ENCODE measurements at regions of chr12 and their contacts with region 1.

Region 1: DNA sequence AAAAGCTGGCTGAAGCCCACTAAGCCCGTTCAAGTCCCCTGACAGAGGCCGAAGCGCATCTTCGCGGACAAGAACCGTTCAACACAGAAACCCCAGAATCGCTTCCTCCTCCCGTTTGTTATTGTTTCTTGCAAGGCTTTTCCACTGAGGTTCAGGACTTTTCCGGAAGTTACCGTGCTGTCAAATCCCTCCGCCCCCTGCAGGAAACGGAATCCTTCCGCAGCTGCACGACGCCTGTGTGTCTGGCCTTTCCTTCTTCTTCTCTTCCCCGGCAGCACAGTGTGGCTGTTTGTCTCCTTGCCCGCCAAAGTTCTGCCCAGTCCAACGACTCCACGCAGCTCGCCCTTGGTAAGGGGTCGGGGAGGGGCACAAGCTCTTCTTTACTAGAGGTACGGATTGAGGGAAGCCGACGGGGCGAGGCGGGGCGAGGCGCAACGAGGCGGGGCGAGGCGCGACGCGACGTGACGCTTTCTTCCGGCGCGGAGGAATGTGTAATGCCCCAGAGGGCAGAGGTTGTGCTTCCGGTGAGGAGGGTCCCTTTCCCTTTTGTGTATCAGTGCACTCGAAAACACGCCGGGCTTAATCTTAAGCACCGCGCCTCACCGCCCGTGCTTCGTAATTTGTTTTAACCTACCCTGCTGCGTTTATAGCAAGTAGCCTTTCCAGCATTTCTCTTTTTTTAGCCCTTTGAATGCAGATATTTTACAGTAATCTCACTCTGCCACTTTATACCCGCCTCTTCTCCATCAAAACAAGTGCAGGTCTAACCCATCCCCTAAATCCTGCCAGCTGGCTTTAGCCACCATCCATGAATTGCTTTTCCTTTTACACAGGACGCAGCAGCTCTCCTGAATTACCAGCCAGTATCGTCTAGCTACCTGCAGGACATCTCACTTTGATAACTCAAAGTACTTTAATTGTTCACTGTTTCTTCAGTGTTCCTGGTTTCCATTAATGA is at the start of gene KDM5A:
- DNase-seq: peak; percentile 82 to 97 (median 94)
- ATAC-seq: peak; percentile 97
- H3K4me3 ChIP-seq: peak within 1 kb of the TSS; percentile 96
- H3K4me3 Mint-ChIP-seq: peak within 1 kb of the TSS; percentile 91 to 100 (median 97)
- H3K27ac ChIP-seq: peak within 1 kb of the TSS; percentile 91
- H3K27ac Mint-ChIP-seq: peak within 1 kb of the TSS; percentile 95 to 100 (median 99)
- H3K4me1 ChIP-seq: peaks cover 31% of the 10 kb centered on the region in 2 donors
- H3K4me1 Mint-ChIP-seq: peaks cover 28 to 55% (median 39%) of the 10 kb centered on the region in 7 donors
- H3K27me3 ChIP-seq: no peaks in the 10 kb centered on the region
- H3K27me3 Mint-ChIP-seq: peaks cover 0 to 3% (median 0%) of the 10 kb centered on the region in 5 donors
- total RNA-seq, gene KDM5A: 110 to 138 (median 124) TPM

Region 2: GRCh38 chr12:128079-128478 is 261.3 kb before region 1 on chr12:
- CTCF ChIA-PET with region 1: no interaction called
- POLR2A ChIA-PET with region 1: no interaction called
- intact Hi-C with region 1: no loop called
- DNase-seq: no peak
- ATAC-seq: peak; percentile 16
- H3K4me3 ChIP-seq: no peak overlapping the region
- H3K4me3 Mint-ChIP-seq: no peak overlapping the region
- H3K27ac ChIP-seq: no peak overlapping the region
- H3K27ac Mint-ChIP-seq: no peak overlapping the region
- H3K4me1 ChIP-seq: no peaks in the 10 kb centered on the region
- H3K4me1 Mint-ChIP-seq: peaks cover 0 to 1% (median 0%) of the 10 kb centered on the region in 7 donors
- H3K27me3 ChIP-seq: no peaks in the 10 kb centered on the region
- H3K27me3 Mint-ChIP-seq: peaks cover 0 to 24% (median 13%) of the 10 kb centered on the region in 5 donors

Region 3: DNA sequence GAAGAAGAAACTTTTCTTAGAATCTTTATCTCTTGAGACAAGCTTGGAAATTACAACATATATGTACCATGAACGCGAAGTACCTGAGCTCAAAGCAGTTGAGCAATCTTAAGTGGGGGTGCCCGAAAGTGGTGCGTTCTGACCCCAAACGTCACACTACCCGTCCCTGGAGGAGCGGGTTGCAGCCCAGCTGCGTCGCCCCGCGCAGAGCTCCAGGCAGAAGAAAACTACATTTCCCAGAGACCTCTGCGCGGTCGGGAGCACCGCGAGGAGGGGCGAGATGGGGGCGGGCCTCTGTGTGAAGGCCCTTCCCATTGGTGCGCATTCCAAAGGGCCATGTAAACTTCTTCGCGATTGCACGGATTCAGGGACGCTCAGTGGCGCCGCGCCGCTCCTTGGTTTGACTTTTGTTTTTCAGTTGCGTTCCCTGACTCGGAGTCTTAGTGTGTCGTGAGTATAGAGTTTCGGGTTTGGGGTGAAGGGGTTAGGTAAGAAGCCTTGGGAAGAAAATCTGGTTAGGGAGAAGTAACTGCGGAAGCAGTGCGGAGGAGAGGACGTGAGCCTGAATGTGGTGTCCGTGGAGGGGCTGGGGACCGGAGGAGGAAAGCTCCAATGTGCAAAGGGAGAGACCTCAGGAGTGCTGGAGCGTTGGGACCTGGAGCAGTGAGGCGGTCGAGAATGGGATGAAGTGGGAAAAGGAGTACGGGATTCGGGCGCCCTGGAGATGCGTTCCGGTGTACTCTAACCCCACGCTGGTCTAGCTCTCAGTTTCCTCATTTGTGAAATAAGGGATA is 12.0 kb after region 1 on chr12 and contains the start of gene CCDC77:
- CTCF ChIA-PET with region 1: interaction called, 8 read pairs
- POLR2A ChIA-PET with region 1: interaction called, 89 read pairs
- intact Hi-C with region 1: loop called (anchors 1 kb)
- DNase-seq: peak; percentile 91 to 97 (median 95)
- ATAC-seq: peak; percentile 100
- H3K4me3 ChIP-seq: peak within 1 kb of the TSS; percentile 94
- H3K4me3 Mint-ChIP-seq: no peak within 1 kb of the TSS
- H3K27ac ChIP-seq: peak within 1 kb of the TSS; percentile 71
- H3K27ac Mint-ChIP-seq: peak within 1 kb of the TSS in 1 of 9 donors; percentile 62
- H3K4me1 ChIP-seq: peaks cover 4 to 13% of the 10 kb centered on the region in 2 donors
- H3K4me1 Mint-ChIP-seq: peaks cover 0 to 9% (median 5%) of the 10 kb centered on the region in 7 donors
- H3K27me3 ChIP-seq: no peaks in the 10 kb centered on the region
- H3K27me3 Mint-ChIP-seq: no peaks in the 10 kb centered on the region
- total RNA-seq, gene CCDC77: 9.7 to 15.6 (median 12.7) TPM

Region 4: DNA sequence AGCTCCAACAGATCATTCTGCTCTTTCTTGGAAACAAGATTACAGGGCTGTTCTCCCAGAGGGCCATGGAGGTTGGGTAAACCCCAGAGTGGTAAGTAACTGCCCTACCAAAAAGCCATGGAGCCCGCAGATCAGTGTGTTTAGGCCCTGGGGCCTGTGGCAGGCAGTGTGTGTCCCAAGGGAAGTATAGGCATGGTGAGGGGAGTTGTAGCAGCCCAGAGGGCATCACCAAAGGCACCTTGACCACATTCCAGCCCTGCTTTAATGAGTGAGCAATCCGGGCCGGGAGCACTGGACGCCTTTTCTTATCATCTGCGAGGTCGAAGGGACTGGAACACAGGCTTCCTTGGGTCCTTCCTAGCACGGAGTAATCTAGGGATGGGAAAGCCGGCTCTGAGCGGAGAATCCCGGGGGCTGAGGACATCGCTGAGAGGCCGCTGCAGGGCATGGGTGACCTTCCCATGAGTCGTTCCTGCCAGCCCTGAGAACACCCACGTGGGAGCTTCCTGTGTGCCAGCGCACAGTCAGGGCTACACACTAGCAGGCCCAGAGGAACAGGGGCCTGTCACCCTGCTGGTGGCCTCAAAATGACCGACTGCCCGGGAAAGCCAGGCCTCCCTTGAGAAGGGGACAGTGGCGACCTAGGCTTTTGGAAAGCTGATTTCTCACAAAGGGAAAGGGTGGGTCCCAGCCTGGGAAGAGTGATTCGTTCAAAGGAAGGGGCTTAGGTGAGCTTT is 182.5 kb after region 1 on chr12:
- CTCF ChIA-PET with region 1: no interaction called
- POLR2A ChIA-PET with region 1: no interaction called
- intact Hi-C with region 1: no loop called
- DNase-seq: peak in 1 of 9 donors; percentile 19
- ATAC-seq: no peak
- H3K4me3 ChIP-seq: no peak overlapping the region
- H3K4me3 Mint-ChIP-seq: peak overlapping the region in 3 of 10 donors; percentile 32 to 66 (median 61)
- H3K27ac ChIP-seq: no peak overlapping the region
- H3K27ac Mint-ChIP-seq: peak overlapping the region in 3 of 9 donors; percentile 21 to 42 (median 30)
- H3K4me1 ChIP-seq: peaks cover 19 to 42% of the 10 kb centered on the region in 2 donors
- H3K4me1 Mint-ChIP-seq: peaks cover 25 to 55% (median 49%) of the 10 kb centered on the region in 7 donors
- H3K27me3 ChIP-seq: no peaks in the 10 kb centered on the region
- H3K27me3 Mint-ChIP-seq: no peaks in the 10 kb centered on the region

Region 5: DNA sequence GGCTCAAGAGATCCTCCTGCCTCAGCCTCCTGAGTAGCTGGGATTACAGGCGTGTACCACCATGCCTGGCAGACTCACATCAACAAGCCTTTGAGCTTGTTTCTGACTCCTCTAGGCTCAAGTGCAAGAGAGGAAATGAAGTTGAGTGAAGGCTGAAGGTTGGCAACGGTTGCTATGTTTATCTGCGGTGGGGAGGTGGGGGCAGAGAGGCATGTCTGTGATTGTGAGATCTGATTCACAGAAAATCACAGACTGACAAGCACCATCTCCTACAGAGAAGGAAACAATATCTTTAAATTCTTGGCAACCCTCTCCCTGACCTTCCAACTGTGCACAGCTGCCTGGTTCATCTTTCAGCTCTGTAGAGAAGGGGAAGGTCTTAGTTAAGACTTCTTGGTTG is 296.0 kb after region 1 on chr12:
- CTCF ChIA-PET with region 1: no interaction called
- POLR2A ChIA-PET with region 1: no interaction called
- intact Hi-C with region 1: no loop called
- DNase-seq: peak; percentile 48 to 96 (median 94)
- ATAC-seq: peak; percentile 96
- H3K4me3 ChIP-seq: no peak overlapping the region
- H3K4me3 Mint-ChIP-seq: peak overlapping the region; percentile 30 to 78 (median 72)
- H3K27ac ChIP-seq: peak overlapping the region; percentile 81
- H3K27ac Mint-ChIP-seq: peak overlapping the region; percentile 90 to 99 (median 98)
- H3K4me1 ChIP-seq: peaks cover 23 to 31% of the 10 kb centered on the region in 2 donors
- H3K4me1 Mint-ChIP-seq: peaks cover 23 to 53% (median 48%) of the 10 kb centered on the region in 7 donors
- H3K27me3 ChIP-seq: no peaks in the 10 kb centered on the region
- H3K27me3 Mint-ChIP-seq: no peaks in the 10 kb centered on the region

Region 6: GRCh38 chr12:789852-790563 is 400.6 kb after region 1 on chr12:
- CTCF ChIA-PET with region 1: no interaction called
- POLR2A ChIA-PET with region 1: no interaction called
- intact Hi-C with region 1: no loop called
- DNase-seq: no peak
- ATAC-seq: peak; percentile 49
- H3K4me3 ChIP-seq: no peak overlapping the region
- H3K4me3 Mint-ChIP-seq: peak overlapping the region in 7 of 10 donors; percentile 33 to 66 (median 46)
- H3K27ac ChIP-seq: no peak overlapping the region
- H3K27ac Mint-ChIP-seq: peak overlapping the region in 8 of 9 donors; percentile 39 to 88 (median 78)
- H3K4me1 ChIP-seq: peaks cover 32 to 39% of the 10 kb centered on the region in 2 donors
- H3K4me1 Mint-ChIP-seq: peaks cover 53 to 97% (median 89%) of the 10 kb centered on the region in 7 donors
- H3K27me3 ChIP-seq: no peaks in the 10 kb centered on the region
- H3K27me3 Mint-ChIP-seq: no peaks in the 10 kb centered on the region

Region 7: DNA sequence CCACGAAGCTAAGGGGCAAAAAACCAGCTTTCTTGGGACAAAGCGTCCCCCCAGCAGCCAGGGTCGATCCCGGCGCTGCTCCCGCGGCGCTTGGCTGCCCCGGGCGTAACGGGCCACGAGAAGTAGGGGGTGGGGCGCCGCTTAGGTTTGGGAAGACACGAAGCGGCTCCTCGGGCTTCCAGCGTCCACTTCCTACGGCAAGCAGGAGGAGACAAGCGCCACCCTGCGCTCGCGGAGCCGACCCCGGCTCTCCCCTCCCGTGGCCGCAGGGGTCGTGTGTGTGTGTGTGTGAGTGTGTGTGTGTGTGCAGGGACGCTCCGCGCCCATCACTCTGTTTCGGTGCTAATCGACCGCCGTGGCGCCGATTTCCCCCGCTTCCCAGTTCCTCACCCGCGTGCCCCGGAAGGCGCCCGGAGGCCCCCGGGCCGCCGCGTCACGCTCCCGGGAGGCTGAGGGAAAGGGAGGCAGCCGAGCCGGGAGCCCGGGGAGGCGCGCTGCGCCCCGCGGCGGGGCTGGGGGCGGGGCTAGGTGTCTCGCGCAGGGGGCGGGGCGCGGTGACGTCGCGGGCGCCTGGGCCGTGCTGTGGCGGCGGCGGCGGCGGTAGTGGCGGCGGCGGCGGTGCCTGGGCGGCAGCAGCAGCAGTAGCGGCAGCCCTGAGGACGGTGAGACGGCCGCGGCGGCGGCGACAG is 601.4 kb after region 1 on chr12 and contains the start of gene ERC1:
- CTCF ChIA-PET with region 1: no interaction called
- POLR2A ChIA-PET with region 1: no interaction called
- intact Hi-C with region 1: loop called in 1 of 2 experiments (anchors 1 kb)
- DNase-seq: peak; percentile 77 to 93 (median 87)
- ATAC-seq: peak; percentile 94
- H3K4me3 ChIP-seq: peak within 1 kb of the TSS; percentile 89
- H3K4me3 Mint-ChIP-seq: peak within 1 kb of the TSS; percentile 86 to 100 (median 97)
- H3K27ac ChIP-seq: peak within 1 kb of the TSS; percentile 87
- H3K27ac Mint-ChIP-seq: peak within 1 kb of the TSS; percentile 89 to 98 (median 96)
- H3K4me1 ChIP-seq: peaks cover 0 to 17% of the 10 kb centered on the region in 2 donors
- H3K4me1 Mint-ChIP-seq: peaks cover 34 to 55% (median 46%) of the 10 kb centered on the region in 7 donors
- H3K27me3 ChIP-seq: no peaks in the 10 kb centered on the region
- H3K27me3 Mint-ChIP-seq: no peaks in the 10 kb centered on the region
- total RNA-seq, gene ERC1: 48.6 to 62.0 (median 52.4) TPM